Activated T-helper 1 cell treated with anti-CD3 and anti-CD28 coated beads, Interleukin-12 subunit alpha, Interleukin-12 subunit beta, Interleukin-2, Interleukin-4 antibody, amounts not matched to agents 30 ng/mL and 10 ng/mL and 1 ng/mL, durations not matched to agents 14 hours and 24 hours and 36 hours (primary cell): ENCODE measurements at regions of chr14 and their contacts with region 1.

Region 1: GRCh38 chr14:30333934-30334333 is 225.0 kb upstream of the G2E3 start:
- DNase-seq: no peak
- H3K4me3 Mint-ChIP-seq: peak overlapping the region; percentile 61
- H3K27ac Mint-ChIP-seq: peak overlapping the region; percentile 64
- H3K4me1 Mint-ChIP-seq: peaks cover 16% of the 10 kb centered on the region
- H3K27me3 Mint-ChIP-seq: no peaks in the 10 kb centered on the region

Region 2: GRCh38 chr14:30287579-30288445 is 46.1 kb before region 1 on chr14:
- intact Hi-C with region 1: loop called (anchors 1 kb)
- DNase-seq: no peak
- H3K4me3 Mint-ChIP-seq: no peak overlapping the region
- H3K27ac Mint-ChIP-seq: no peak overlapping the region
- H3K4me1 Mint-ChIP-seq: no peaks in the 10 kb centered on the region
- H3K27me3 Mint-ChIP-seq: peaks cover 2% of the 10 kb centered on the region

Region 3: DNA sequence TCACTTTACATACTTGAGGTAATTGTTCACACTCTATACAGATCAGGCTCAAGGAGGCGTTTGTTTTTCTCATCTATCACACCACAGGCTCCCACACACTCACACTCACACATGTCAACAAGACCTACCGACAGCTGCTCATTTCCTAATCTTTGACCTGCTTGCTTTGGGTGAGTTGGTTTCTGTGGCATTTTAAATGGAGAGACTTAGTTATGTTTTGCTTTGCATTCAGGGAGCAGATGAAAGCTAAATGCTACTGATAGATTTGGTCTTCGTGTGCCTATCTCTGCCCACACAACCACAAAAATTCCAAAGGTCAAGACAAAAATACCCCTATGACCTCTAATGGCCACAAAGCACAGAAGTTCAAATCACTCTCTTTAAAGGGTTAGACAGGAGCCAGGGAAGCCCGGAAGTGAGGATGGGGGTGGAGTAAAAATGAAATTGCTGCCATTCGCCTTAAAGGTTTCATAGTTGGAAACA is 21.5 kb after region 1 on chr14:
- intact Hi-C with region 1: loop called (anchors 1 kb)
- DNase-seq: no peak
- H3K4me3 Mint-ChIP-seq: peak overlapping the region; percentile 3
- H3K27ac Mint-ChIP-seq: peak overlapping the region; percentile 74
- H3K4me1 Mint-ChIP-seq: peaks cover 22% of the 10 kb centered on the region
- H3K27me3 Mint-ChIP-seq: no peaks in the 10 kb centered on the region